ENCODE measurements at regions of chr1 and their contacts with region 1.

Region 1: DNA sequence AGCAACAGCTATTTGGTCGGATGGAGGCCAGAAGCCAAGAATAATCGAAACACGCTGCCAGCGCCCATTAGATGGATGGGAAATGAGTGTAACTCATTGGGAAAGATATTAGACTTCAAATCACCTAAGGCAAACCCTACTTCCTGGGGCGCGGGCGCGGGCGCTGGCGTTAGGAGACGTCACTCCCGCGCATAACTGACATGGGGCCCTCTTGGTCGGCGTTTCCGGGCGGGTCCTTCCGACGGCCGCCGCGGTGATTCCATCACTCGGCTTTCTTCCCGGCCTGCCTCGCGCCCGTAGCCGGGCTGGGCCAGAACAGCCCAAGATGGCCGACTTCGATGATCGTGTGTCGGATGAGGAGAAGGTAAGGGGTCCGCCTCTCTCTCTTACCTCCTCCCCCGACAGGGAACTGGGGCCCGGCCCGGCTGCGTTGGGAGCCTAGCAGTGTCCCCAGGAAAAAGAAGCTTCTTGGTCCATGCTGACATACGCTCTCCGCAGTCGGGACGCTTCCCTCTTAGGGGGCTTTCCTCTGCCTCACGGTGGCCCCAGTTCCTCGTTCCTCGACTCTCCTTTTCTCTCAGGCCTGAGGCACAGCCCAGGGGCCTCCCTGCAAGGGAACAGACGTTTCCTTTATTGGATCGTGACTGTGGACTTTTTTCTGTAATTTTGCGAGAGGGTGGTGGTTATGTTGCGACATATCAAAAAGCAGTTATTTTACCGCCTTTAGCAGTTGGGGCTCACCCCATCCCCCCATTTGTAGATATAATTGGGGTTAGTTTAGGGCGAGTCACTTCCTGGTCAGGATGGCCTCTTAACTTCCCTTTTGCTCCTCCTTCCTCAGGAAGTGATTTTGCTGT is at the start of gene CAPZA1:
- DNase-seq: peak; percentile 93
- H3K4me3 ChIP-seq: peak within 1 kb of the TSS; percentile 83
- H3K27ac ChIP-seq: peak within 1 kb of the TSS; percentile 99
- H3K4me1 ChIP-seq: peaks cover 5% of the 10 kb centered on the region
- H3K27me3 ChIP-seq: no peaks in the 10 kb centered on the region
- CTCF ChIP-seq: no peak
- total RNA-seq, gene CAPZA1: 165 to 178 TPM

Region 2: DNA sequence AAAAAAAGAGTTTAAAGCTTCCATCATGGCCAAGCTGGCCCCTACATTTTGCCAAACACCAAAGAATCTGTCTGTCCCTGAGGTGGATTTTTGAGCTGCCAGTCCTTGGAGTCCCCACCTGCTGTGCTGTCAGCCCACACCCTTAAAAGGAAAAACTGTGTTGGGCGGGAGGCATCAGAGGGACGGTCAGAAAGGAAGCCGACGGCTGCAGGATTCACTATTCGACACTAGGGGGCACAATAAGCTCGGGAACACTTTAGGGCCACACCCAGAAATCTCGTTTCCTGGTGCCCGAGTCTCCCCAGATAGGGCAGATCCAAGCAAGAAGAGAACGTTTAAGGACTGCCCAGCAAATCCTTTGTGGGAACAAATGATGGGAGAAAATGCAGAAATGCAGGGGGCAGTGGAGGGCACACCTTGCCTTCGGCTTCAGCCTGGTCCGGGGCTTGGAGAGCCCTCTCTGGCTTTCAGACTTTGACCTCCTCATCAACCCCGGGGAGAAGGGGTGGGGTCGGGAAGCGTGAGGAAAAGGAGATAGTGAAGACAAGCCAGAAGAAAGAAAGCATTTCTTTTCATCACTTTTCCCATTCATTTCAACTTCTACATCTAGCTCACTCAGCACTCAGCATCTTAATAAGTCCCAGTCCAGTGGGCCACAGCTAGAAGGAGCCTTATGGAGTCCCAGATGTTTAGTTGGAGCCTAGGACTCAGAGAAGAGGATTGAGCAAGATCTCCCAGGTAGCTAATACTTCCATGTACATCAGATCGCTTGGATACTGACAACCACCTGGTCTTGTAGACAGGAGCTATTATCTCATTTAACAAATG is 228.8 kb before region 1 on chr1:
- intact Hi-C with region 1: loop called (anchors 5 kb)
- DNase-seq: peak; percentile 96
- H3K4me3 ChIP-seq: peak overlapping the region; percentile 37
- H3K27ac ChIP-seq: peak overlapping the region; percentile 87
- H3K4me1 ChIP-seq: peaks cover 10% of the 10 kb centered on the region
- H3K27me3 ChIP-seq: no peaks in the 10 kb centered on the region
- CTCF ChIP-seq: peak; percentile 92

Region 3: DNA sequence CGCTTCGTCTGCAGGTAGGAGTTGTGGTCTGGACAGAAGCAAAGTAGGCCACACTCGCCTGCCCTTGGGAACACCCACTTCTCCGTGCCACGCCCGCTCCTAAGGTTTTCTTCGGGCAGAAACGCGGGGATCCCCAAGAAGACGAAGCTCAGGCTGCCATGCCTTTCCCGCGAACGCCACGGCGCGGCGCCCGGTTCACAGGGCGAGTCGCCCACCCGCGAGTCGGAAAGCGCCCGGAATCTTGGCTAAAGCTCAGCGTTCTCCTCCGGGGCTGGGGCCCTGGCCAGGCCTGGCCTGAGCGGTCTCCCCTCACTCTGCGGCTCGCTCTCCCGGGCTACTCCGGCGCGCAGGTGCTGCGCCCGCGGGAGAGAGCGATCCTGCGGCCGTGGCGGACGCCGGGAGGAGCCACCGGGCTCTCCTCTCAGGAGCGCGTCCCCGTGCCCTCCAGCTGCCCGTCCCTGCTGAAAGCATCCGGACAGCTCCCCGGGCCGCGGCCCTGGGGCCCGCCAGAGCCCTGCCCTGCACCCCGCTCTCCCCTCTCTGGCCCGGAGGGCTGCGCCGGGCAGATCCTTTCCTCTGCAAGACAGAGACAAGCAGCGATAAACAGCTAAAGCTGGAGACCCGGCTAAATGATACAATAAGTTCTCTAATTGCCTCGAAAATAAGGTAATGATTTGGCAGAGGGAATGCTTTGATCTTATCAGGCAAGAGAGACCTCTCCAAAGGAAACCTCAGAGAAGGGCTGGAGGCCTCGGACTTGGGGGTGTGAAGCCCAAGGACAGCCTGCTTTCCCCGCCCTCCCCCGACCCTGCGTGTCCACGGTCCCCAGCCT is 117.7 kb before region 1 on chr1:
- intact Hi-C with region 1: loop called (anchors 5 kb)
- DNase-seq: peak; percentile 79
- H3K4me3 ChIP-seq: peak overlapping the region; percentile 42
- H3K27ac ChIP-seq: no peak overlapping the region
- H3K4me1 ChIP-seq: no peaks in the 10 kb centered on the region
- H3K27me3 ChIP-seq: no peaks in the 10 kb centered on the region
- CTCF ChIP-seq: peak; percentile 63

Region 4: GRCh38 chr1:112754116-112754628 is 134.4 kb after region 1 on chr1:
- intact Hi-C with region 1: no loop called
- DNase-seq: no peak
- H3K4me3 ChIP-seq: no peak overlapping the region
- H3K27ac ChIP-seq: no peak overlapping the region
- H3K4me1 ChIP-seq: no peaks in the 10 kb centered on the region
- H3K27me3 ChIP-seq: no peaks in the 10 kb centered on the region
- CTCF ChIP-seq: no peak